Prostate gland (tissue), 2 donors: ENCODE measurements at regions of chrX and their contacts with region 1.

Region 1: DNA sequence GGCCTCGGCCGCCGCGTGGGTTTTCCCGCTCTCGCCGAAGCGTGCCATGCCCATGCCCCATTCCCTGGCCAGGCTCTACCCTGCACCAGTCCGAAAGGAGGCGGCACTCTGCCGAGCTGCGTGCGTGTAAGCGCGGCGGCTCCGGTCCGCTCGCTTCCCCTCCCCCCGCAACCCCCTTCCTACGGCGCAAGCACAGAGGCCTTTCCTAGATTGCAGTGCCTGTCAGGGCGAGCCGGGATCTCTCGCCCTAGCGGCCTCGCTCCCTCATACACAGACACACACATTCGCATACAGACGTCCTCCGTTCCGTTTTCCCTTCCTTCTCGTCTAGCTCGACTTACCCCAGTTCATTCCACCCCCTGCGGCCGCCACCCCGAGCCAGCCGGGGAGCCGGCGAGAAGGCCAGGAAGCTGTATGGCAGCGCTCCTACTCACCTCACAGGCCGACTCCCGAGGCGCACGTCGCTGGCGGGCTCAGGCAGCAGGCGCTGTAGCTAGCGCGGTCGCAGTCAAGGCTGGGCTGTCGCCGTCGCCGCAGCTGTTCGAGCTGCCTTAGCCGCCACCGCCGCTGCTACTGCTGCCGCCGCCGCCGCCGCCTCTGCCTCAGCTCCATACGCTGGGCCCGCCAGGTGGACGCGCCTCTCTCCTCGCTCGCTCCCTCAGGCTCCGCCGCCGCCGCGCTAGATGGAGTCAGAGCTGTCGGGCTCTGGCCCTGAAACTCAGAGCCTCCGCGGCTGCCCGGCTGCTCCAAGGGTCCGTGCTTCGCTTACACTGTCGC is 615 bp downstream of the NEXMIF start:
- DNase-seq: peak; percentile 46
- H3K4me3 ChIP-seq: peak overlapping the region; percentile 39 to 43
- H3K27ac ChIP-seq: peak overlapping the region; percentile 78 to 82
- H3K4me1 ChIP-seq: no peaks in the 10 kb centered on the region
- H3K27me3 ChIP-seq: no peaks in the 10 kb centered on the region
- CTCF ChIP-seq: no peak
- POLR2A ChIP-seq: no peak

Region 2: GRCh38 chrX:74160358-74160757 is 764.3 kb before region 1 on chrX:
- intact Hi-C with region 1: no loop called
- DNase-seq: no peak
- H3K4me3 ChIP-seq: no peak overlapping the region
- H3K27ac ChIP-seq: no peak overlapping the region
- H3K4me1 ChIP-seq: no peaks in the 10 kb centered on the region
- H3K27me3 ChIP-seq: no peaks in the 10 kb centered on the region
- CTCF ChIP-seq: no peak
- POLR2A ChIP-seq: no peak

Region 3: DNA sequence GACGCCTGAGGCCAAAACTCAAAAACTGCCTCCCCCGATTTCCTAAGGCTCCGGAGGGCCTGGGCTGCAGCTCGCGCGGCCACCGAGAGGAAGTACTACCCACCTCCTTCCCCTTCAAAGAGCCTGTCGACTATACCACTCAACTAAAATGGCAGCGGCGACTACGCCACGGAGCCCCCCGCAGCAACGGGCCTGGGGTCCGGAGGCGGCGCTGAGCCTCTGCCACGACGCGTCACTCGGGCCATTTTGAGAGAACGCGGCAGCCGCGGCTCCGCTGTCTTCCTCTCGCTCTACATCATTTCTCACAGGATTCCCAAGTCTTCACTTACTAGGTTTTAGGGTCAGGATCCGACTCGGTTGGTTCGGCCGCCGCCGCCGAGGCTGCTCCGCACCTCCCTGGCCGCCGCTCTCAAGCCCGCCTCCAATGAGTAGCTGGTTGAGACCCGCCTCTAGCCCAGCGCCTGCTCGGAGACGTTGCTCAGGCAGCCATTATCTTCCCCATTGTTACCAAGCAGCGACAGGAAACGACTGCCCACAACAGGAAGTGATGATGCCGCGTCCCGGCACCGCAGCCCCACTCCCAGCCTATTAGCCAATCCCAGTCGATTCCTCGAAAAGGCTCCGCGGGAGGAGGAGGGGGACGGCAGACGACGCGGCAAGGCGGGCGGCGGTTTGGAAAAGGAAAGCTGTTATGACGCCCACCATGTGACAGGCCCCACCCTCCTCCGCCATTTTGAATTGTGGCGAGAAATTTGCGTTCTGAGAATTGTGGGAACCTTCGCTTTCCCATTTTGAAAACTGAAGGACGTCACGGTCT is 310.3 kb before region 1 on chrX and contains the start of gene RLIM:
- intact Hi-C with region 1: loop called (anchors 10 kb)
- DNase-seq: peak; percentile 91
- H3K4me3 ChIP-seq: peak within 1 kb of the TSS; percentile 63 to 66
- H3K27ac ChIP-seq: peak within 1 kb of the TSS; percentile 93
- H3K4me1 ChIP-seq: no peaks in the 10 kb centered on the region
- H3K27me3 ChIP-seq: no peaks in the 10 kb centered on the region
- CTCF ChIP-seq: no peak
- POLR2A ChIP-seq: peak; percentile 69
- total RNA-seq, gene RLIM: 27.5 to 30.3 TPM

Region 4: GRCh38 chrX:74636749-74637314 is 287.8 kb before region 1 on chrX:
- intact Hi-C with region 1: no loop called
- DNase-seq: no peak
- H3K4me3 ChIP-seq: no peak overlapping the region
- H3K27ac ChIP-seq: no peak overlapping the region
- H3K4me1 ChIP-seq: no peaks in the 10 kb centered on the region
- H3K27me3 ChIP-seq: no peaks in the 10 kb centered on the region
- CTCF ChIP-seq: no peak
- POLR2A ChIP-seq: no peak

Region 5: DNA sequence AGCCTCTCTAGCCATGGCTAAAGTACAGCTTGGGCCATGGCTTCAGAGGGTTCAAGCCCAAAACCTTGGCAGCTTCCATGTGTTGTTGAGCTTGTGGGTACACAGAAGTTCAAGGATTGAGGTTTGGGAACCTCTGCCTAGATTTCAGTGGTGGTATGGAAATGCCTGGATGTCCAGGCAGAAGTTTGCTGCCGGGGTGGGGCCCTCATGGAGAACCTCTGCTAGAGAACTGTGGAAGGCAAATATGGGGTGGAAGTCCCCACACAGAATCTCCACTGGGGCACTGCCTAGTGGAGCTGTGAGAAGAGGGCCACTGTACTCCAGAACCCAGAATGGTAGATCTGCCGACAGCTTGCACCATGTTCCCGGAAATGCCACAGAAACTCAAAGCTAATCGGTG is 58.9 kb before region 1 on chrX:
- intact Hi-C with region 1: no loop called
- DNase-seq: no peak
- H3K4me3 ChIP-seq: no peak overlapping the region
- H3K27ac ChIP-seq: no peak overlapping the region
- H3K4me1 ChIP-seq: no peaks in the 10 kb centered on the region
- H3K27me3 ChIP-seq: no peaks in the 10 kb centered on the region
- CTCF ChIP-seq: no peak
- POLR2A ChIP-seq: no peak

Region 6: DNA sequence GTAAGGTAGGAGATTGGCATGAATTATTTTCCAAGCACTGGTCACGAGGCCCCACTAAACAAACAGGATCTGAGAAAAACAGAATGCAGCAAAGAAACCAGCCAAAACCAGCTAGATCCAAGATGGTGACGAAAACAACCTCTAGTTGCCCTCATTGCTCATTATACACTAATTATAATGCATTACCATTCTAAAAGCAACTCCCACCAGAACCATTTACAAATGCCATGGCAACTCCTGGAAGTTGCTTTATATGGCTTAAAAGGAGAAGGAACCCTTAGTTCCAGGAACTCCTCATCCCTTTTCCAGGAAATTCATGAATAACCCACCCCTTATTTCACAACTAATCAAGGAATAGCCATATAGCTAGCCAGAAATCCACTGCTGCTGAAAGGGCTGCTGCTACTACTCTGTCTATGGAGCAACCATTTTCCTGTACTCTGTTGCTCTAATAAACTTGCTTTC is 162.1 kb after region 1 on chrX:
- intact Hi-C with region 1: no loop called
- DNase-seq: no peak
- H3K4me3 ChIP-seq: no peak overlapping the region
- H3K27ac ChIP-seq: no peak overlapping the region
- H3K4me1 ChIP-seq: no peaks in the 10 kb centered on the region
- H3K27me3 ChIP-seq: no peaks in the 10 kb centered on the region
- CTCF ChIP-seq: no peak
- POLR2A ChIP-seq: no peak

Region 7: GRCh38 chrX:75156021-75156945 is 231.6 kb after region 1 on chrX and contains the start of gene ABCB7:
- intact Hi-C with region 1: loop called (anchors 10 kb)
- DNase-seq: peak; percentile 70
- H3K4me3 ChIP-seq: peak within 1 kb of the TSS; percentile 45 to 54
- H3K27ac ChIP-seq: peak within 1 kb of the TSS; percentile 67 to 77
- H3K4me1 ChIP-seq: no peaks in the 10 kb centered on the region
- H3K27me3 ChIP-seq: no peaks in the 10 kb centered on the region
- CTCF ChIP-seq: peak in 1 of 4 experiments; percentile 21
- POLR2A ChIP-seq: no peak
- total RNA-seq, gene ABCB7: 41.1 to 64.3 TPM

Region 8: DNA sequence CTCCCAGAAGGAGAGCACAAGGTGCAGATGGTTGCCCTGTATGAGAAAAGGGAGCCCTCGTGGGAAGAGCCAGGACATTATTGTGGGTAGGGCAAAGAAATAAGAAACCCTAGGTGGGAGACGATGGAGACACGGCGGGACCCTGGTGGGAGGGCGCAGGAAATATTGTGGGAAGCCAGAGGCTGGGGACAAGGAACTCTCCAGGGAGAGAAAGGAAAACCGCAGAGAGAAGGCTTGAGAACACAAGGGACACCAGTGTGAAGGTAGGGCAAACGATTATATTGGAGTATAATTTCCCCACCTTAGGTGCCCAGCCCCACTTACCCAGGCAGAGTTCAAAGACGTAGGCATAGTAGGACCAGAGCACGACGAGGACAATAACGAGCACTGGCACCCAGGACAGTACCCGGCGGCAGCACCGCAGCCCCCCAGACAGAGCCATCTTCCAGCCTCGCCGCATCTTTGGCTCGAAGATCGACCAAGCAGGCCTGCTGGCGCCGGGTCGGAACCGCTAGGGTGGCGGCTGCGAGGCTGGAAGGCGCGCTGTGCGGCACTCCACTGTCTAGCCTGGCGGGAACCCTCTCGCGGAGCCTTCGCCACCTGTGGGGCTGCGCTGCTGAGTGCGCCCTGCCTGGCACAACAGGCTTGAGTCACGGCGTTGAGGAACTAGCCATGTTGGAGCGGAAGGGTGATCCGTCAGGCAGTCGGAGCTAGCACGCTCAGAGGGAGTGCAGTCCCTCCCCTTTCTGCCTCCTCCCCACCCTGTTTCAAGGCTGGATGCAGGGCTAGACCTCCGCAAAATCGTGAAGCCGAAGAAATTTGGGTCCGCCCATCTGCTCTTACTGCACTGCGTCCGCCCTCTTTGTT is 598.2 kb after region 1 on chrX and contains the start of gene ZDHHC15:
- intact Hi-C with region 1: loop called (anchors 10 kb)
- DNase-seq: peak; percentile 21
- H3K4me3 ChIP-seq: peak within 1 kb of the TSS; percentile 29 to 40
- H3K27ac ChIP-seq: peak within 1 kb of the TSS; percentile 56 to 62
- H3K4me1 ChIP-seq: no peaks in the 10 kb centered on the region
- H3K27me3 ChIP-seq: no peaks in the 10 kb centered on the region
- CTCF ChIP-seq: peak in 1 of 4 experiments; percentile 12
- POLR2A ChIP-seq: no peak
- total RNA-seq, gene ZDHHC15: 2.6 to 2.9 TPM